Posterior cingulate gyrus (tissue), 11 donors: ENCODE measurements at regions of chr6 and their contacts with region 1.

Region 1: DNA sequence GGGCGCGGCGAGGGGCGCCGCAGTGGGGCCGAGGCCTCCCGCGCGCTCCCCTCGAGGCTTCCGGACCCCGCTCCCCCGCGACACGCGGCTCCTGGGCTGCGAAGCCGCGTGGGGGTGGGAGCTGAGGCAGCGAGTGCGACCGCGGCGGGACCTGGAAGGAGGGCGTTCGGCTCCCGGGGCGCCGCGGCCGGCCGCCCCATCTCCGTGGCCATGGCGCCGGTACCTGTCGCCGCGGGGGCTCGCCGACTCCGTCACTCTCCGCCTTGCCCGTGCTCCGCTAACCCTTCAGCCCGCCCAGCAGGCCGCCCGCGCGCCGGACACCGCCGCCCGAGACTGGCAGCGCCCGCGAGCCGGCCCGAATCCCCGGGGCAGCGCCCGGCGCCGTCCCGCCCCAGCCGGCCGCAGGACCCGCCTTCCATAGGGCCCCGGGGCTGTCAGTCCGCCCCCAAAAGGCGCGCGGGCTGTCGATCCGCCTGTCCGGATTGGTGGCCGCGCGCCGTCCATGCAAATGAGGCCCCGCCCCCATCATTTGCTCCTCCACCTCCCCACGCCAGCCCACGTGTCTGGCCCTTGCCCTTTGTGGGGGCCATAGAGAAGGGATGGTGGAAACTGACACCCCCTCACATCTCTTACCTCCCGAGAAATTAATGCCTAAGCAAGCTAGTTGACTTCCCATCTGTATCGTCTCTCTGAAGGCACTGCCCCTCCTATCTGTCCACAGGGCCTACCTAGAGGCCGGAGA is at the start of gene FKBP5:
- DNase-seq: peak; percentile 83 to 99 (median 93)

Region 2: GRCh38 chr6:35583893-35584688 is 104.7 kb before region 1 on chr6:
- intact Hi-C with region 1: loop called (anchors 5 kb)
- DNase-seq: peak in 6 of 10 donors; percentile 58 to 91 (median 70)

Region 3: DNA sequence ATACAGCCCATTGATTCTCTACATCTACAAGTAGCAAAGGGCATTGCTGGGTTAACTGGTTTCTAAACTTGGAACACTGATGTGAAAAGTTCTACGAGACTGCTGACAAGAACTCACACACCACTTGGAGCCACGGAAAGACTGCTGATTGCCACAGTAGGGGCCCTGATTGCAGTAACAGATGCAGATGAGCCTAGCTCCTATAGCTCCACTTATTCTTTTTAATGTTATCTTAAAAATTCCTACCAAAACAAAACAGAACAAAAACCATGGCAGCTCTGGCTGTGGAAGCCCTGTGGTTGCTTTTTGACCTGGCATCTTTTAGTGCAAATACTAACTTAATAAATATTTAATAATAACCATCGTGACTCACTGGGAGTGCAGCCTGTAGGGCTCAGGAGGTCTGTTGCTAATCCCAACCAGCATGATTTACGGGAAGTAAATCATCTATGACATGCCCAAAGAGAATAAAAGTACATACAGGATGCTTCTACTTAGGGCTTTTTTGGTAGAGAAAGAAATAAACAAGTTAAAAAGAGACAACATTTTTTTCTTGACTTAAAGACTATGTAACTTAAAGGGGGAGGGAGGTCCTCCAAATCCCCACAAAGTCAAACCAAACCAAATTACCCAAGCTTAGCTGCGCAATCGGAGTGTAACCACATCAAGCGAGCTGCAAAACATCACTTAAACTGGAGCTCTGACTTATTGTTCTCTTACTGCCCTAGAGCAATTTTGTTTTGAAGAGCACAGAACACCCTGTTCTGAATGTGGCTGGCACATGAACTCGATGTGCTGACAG is 87.2 kb before region 1 on chr6:
- intact Hi-C with region 1: loop called (anchors 5 kb)
- DNase-seq: peak in 6 of 10 donors; percentile 6 to 52 (median 29)

Region 4: DNA sequence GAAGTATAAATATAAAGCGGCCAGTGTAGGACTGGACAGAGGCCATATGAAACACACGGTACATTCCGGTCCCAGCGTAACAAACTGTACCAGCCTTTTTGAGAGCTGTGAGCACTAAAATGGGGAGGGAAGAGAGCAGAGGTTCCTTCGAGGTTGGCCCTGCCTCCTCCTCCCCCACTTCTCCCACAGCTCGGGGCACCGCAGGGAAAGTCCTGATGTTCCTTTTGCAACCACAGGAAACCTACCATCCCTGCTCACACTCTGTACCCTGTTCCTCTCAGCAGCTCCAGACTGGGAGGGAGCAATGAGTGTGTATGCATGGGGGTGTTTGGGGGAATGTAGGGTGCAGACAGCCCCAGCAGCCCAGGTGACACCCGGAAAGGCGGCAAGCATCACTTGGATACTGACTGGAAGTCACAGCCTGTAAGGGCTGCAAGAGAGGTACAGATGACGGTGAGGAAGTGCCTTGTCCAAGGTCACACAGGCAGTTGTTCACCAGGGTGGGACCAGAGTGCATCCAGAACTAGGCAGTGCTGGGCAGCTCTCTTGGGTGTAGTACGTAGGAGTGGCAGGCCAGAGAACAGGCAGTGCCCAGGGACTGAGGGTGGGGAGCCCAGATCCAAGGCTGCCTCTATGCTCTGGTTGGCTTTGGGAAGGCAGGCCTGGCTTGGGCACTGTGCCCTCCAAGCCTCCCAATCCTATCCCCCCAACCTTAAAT is 37.1 kb after region 1 on chr6:
- intact Hi-C with region 1: loop called (anchors 2 kb)
- DNase-seq: peak; percentile 21 to 92 (median 54)

Region 5: DNA sequence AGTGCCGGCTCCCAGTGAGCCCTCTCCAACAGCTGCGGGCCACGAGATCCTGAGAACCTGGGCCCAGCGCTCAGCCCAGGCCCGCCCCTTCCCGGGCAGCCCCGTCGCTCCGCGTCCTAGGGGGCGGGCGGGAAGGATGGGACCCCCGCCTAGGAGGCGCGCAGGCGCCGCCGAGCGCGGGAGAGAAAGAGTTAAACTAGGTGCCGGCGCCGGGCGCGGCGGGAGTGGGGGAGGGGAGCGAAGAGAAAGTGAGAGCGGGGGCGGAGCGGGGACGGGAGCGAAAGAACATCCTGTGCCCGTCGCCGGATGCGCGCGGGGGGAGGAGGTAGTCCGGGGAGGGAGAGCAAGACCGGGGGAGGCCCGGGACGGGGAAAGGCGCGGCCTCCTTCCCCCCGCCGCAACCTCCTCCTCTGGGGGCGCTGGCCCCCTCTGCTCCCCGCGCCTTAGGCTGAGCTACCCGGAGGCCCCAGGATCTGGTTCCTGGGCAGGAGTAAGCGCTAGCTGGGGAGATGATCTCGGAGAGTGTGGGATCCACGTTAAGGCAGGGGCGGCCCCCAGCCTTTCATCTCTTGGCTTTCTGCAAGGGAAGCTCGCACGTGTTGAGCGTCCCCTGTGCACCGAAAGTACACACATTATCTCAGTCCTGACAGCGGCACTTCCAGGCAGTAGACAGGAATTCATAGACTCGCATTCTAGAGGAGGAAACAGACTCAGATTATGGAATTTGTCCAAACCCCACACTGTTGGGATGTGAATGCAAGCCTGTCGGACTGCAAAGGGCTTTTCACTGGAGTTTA is 43.2 kb after region 1 on chr6:
- intact Hi-C with region 1: loop called (anchors 2 kb)
- DNase-seq: peak; percentile 78 to 97 (median 88)